Head of caudate nucleus (tissue), 42 donors: ENCODE measurements at regions of chr9 and their contacts with region 1.

Region 1: GRCh38 chr9:32776201-32776600 is 7.1 kb upstream of the TMEM215 start:
- DNase-seq: no peak

Region 2: GRCh38 chr9:32603914-32604741 is 172.1 kb before region 1 on chr9:
- intact Hi-C with region 1: no loop called
- DNase-seq: no peak

Region 3: DNA sequence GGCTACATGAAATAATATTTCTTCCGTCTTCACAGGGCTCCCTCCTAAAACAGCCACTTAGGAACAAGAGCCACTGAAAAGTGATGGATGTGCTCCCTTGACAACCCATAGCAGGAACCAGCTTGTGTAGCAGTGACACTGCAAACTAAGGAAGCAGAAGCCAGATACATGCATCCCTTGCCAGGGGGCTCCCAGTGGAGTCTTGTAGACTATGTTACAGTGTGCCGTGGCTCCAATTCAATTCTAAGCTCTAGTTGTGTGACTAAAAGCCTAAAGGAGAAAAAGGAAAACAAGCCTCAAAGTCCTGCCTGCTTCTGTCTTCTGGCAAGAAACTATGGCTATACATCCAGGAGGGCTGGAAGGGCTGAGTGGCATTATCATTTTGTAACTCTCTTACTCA is 128.5 kb before region 1 on chr9:
- intact Hi-C with region 1: loop called (anchors 10 kb)
- DNase-seq: no peak